ENCODE measurements at regions of chr12 and their contacts with region 1.

Region 1: DNA sequence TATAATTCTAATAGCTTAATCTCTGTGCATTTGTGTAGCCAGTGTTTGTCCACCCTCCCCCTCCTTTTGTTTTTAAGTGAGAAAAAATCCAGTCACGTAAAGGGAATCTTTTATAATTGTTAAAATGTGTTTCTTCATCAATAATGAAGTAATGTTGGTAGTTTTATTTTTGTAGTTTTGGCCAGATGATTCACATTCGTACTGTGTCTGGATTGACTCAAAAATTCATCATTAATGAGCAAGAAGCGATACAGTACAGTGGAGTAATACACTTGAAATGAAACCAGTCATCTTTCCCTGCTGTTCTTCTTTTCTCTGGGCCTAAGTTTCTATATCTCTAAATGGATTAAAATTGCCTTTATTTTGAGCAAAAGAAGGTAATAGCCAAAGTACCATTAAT is 86.5 kb downstream of the SRGAP1 start:
- DNase-seq: no peak
- H3K4me3 ChIP-seq: no peak overlapping the region
- H3K27ac ChIP-seq: no peak overlapping the region
- H3K4me1 ChIP-seq: peaks cover 21% of the 10 kb centered on the region
- H3K27me3 ChIP-seq: no peaks in the 10 kb centered on the region
- CTCF ChIP-seq: no peak

Region 2: DNA sequence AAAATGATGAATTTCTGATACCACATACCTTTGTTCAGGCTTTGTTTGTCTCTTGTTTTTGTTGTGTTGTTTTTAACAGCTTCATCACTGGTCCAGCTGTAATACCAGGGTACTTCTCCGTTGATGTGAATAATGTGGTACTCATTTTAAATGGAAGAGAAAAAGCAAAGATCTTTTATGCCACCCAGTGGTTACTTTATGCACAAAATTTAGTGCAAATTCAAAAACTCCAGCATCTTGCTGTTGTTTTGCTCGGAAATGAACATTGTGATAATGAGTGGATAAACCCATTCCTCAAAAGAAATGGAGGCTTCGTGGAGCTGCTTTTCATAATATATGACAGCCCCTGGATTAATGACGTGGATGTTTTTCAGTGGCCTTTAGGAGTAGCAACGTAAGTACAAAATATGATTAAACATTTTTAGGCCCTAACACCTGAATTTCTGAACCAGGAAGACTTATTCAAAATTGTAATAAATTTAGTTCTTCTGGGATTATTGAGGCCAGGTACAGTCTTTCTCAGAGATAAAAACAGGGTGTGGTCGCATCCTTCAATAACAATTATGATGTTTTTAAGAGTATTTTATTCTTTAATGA is 128.9 kb before region 1 on chr12:
- CTCF ChIA-PET with region 1: no interaction called
- POLR2A ChIA-PET with region 1: no interaction called
- intact Hi-C with region 1: no loop called
- DNase-seq: no peak
- H3K4me3 ChIP-seq: no peak overlapping the region
- H3K27ac ChIP-seq: no peak overlapping the region
- H3K4me1 ChIP-seq: peaks cover 22% of the 10 kb centered on the region
- H3K27me3 ChIP-seq: no peaks in the 10 kb centered on the region
- CTCF ChIP-seq: peak; percentile 80

Region 3: DNA sequence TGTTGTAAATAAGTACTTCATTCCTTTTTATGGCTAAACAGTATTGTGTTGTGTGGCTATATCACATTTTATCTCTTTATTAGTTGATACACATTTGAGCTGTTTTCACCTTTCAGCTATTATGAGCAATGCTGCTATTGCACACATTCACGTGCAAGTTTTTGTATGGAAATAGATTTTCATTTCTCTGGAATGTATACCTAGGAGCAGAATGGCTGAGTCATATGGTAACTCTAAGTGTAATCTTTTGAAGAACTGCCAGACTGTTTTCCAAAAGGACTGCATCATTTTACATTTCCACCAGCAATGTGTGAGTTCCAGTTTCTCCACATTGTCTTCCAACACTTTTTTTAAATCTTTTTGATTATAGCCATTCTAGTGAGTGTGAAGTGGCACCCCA is 47.5 kb after region 1 on chr12:
- CTCF ChIA-PET with region 1: no interaction called
- POLR2A ChIA-PET with region 1: no interaction called
- intact Hi-C with region 1: loop called (anchors 5 kb)
- DNase-seq: peak; percentile 9 to 88
- H3K4me3 ChIP-seq: no peak overlapping the region; the same call in 1 of the 2 replicates
- H3K27ac ChIP-seq: peak overlapping the region; percentile 76
- H3K4me1 ChIP-seq: peaks cover 23% of the 10 kb centered on the region
- H3K27me3 ChIP-seq: no peaks in the 10 kb centered on the region
- CTCF ChIP-seq: no peak

Region 4: GRCh38 chr12:64039281-64039871 is 108.4 kb after region 1 on chr12:
- CTCF ChIA-PET with region 1: no interaction called
- POLR2A ChIA-PET with region 1: no interaction called
- intact Hi-C with region 1: no loop called
- DNase-seq: no peak
- H3K4me3 ChIP-seq: no peak overlapping the region
- H3K27ac ChIP-seq: no peak overlapping the region
- H3K4me1 ChIP-seq: no peaks in the 10 kb centered on the region
- H3K27me3 ChIP-seq: no peaks in the 10 kb centered on the region
- CTCF ChIP-seq: no peak

Region 5: GRCh38 chr12:64451687-64452558 is 521.0 kb after region 1 on chr12 and contains the start of gene TBK1:
- CTCF ChIA-PET with region 1: interaction called, 22 read pairs
- POLR2A ChIA-PET with region 1: no interaction called
- intact Hi-C with region 1: no loop called
- DNase-seq: peak; percentile 74 to 90
- H3K4me3 ChIP-seq: peak within 1 kb of the TSS; percentile 69
- H3K27ac ChIP-seq: peak within 1 kb of the TSS; percentile 87
- H3K4me1 ChIP-seq: peaks cover 26% of the 10 kb centered on the region
- H3K27me3 ChIP-seq: no peaks in the 10 kb centered on the region
- CTCF ChIP-seq: no peak
- total RNA-seq, gene TBK1: 18.0 and 26.2 TPM in 2 replicates